ENCODE measurements at regions of chr4 and their contacts with region 1.

Region 1: DNA sequence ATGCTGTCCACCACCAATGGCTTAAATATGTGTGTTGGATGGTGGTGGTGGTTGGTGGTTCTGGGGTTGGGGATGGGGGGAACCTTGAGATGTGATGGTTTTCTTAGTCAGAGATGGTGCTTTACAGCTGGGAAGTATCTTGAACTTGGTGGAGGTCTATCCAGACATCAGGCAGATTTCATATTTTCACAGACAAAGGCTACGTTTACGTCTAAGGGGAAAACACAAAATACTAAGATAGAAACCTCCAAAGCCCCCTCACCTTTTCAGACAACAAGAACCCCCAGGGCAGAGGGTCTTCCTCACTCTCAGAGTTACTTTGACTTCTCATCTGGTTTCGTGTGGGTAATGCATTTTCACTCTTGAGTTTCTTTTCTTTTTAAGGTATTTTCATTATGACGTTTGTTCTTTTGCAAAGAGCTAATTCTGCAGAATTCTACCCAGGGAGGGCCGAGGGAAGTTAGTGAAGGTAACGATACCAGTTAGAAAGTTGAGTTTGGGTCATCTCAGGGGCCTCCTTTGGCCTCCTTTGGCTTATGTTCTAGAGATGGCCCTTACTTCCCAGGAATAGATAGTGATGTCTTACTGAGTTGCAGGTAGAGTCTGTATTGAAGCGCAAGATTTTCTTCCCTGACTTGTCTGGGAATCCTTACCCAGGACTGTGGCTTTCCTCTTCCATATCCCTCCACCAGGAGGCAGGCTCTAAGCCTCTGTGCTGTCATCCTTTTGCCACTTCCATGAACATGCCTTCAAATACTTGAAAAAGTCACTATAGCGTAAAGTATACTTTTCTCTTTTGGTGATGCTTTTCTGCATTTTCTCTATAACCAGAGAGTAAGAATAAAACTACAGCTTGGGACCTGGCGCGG is 31.9 kb downstream of the RHOH start:
- DNase-seq: peak in 1 of 14 experiments; percentile 52
- ATAC-seq: no peak
- H3K4me3 ChIP-seq: peak overlapping the region; percentile 8
- H3K4me3 Mint-ChIP-seq: peak overlapping the region; percentile 49
- H3K27ac ChIP-seq: peak overlapping the region; percentile 70 to 82
- H3K27ac Mint-ChIP-seq: peak overlapping the region; percentile 93
- H3K4me1 ChIP-seq: peaks cover 86% of the 10 kb centered on the region
- H3K4me1 Mint-ChIP-seq: peaks cover 91% of the 10 kb centered on the region
- H3K27me3 ChIP-seq: no peaks in the 10 kb centered on the region
- H3K27me3 Mint-ChIP-seq: no peaks in the 10 kb centered on the region
- CTCF ChIP-seq: peak; percentile 37

Region 2: GRCh38 chr4:40065010-40065409 is 163.7 kb before region 1 on chr4:
- CTCF ChIA-PET with region 1: no interaction called
- POLR2A ChIA-PET with region 1: no interaction called
- intact Hi-C with region 1: no loop called
- DNase-seq: no peak
- ATAC-seq: no peak
- H3K4me3 ChIP-seq: no peak overlapping the region
- H3K4me3 Mint-ChIP-seq: no peak overlapping the region
- H3K27ac ChIP-seq: no peak overlapping the region
- H3K27ac Mint-ChIP-seq: peak overlapping the region; percentile 80
- H3K4me1 ChIP-seq: peaks cover 14% of the 10 kb centered on the region
- H3K4me1 Mint-ChIP-seq: peaks cover 61% of the 10 kb centered on the region
- H3K27me3 ChIP-seq: no peaks in the 10 kb centered on the region
- H3K27me3 Mint-ChIP-seq: no peaks in the 10 kb centered on the region
- CTCF ChIP-seq: no peak

Region 3: DNA sequence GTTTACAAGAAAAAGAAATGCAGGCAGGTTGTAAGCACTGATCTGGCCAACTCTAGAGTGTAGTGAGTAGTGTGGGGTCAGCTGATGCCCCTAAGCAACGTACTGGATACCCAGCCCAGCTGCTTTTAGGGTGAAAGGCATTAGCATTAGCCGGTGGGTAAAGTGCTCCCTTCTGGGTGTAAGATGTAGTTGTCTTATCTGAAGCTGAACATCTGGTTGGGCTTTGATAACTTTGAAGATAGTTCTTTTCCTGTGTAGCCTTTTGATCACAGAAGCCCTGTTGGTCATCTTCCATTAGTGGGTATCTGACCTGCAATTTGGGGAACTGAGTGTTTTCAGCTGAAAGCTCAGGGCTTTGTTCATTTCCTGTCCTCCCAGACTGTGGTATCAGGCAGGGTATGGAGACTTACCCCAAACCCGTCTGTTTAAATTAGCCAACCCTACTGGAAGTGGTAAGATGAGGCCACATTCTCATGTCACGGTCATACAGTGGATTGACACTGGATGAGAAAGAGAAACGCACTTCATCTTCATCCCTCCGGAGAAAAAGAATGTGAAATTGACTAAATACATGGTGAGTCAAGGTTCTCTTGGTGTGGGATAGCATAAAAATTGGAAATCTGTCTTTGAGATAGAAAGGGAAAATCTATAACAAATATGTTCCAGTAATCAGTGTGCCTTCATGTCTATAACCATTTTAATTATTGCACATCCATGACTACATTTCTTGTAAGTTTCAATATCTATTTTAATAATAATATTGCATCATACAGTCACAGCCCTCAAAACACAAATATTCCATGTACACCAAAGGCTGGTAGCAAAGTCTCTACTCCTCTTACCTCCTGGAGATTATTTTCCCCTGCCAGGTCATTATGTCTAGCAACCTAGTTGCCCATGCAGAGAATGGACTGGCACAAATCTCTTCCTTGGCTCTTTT is 23.2 kb before region 1 on chr4:
- CTCF ChIA-PET with region 1: interaction called, 4 read pairs
- POLR2A ChIA-PET with region 1: interaction called, 156 read pairs
- intact Hi-C with region 1: loop called in 1 of 2 experiments (anchors 2 kb)
- DNase-seq: peak in 4 of 14 experiments; percentile 41 to 76 (median 70)
- ATAC-seq: peak; percentile 41
- H3K4me3 ChIP-seq: peak overlapping the region; percentile 74
- H3K4me3 Mint-ChIP-seq: peak overlapping the region; percentile 100
- H3K27ac ChIP-seq: peak overlapping the region; percentile 93 to 99
- H3K27ac Mint-ChIP-seq: peak overlapping the region; percentile 99
- H3K4me1 ChIP-seq: peaks cover 42% of the 10 kb centered on the region
- H3K4me1 Mint-ChIP-seq: peaks cover 79% of the 10 kb centered on the region
- H3K27me3 ChIP-seq: no peaks in the 10 kb centered on the region
- H3K27me3 Mint-ChIP-seq: no peaks in the 10 kb centered on the region
- CTCF ChIP-seq: no peak

Region 4: DNA sequence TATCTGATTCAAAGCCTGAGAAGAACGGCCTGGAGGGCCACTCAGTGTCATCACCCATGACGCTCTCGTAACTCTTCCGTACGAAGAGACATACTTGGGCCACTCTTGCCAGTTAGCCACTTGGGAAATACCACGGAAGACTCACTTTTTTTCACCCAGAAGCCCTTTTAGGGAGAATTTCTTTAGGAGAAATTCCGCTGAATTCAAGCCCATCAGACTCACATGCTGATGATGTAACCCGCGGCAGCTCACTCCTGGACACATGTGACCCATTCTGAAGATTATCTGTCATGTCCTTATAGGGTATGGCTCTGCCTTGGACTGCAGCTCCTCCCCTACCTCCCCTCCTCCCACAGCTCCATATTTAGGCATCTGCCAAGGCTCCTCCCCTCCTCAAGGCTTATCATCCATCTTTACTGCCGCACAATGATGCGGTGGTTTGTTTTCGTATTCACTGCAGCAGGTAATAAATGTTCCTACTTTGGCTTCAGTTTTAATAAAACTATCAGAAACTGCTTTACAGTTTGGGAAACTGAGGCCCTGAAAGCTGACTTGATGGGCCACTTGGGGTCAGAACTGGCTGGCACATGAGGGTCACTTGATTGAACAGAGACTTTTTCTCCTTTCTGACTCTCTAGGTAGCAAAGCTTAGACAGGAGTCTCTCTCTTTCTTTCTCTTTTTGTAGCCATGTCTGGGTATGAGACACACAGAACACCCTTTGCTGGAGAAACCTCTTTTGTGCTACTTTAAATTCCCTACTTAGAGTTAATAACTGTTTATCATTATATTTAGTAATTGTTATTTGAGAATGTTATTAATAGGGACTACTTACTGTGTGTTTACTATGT is 10.2 kb after region 1 on chr4:
- CTCF ChIA-PET with region 1: interaction called, 4 read pairs
- POLR2A ChIA-PET with region 1: interaction called, 49 read pairs
- intact Hi-C with region 1: no loop called
- DNase-seq: peak; percentile 50 to 95 (median 69)
- ATAC-seq: peak; percentile 93
- H3K4me3 ChIP-seq: peak overlapping the region; percentile 46
- H3K4me3 Mint-ChIP-seq: peak overlapping the region; percentile 55
- H3K27ac ChIP-seq: peak overlapping the region; percentile 79 to 97
- H3K27ac Mint-ChIP-seq: peak overlapping the region; percentile 93
- H3K4me1 ChIP-seq: peaks cover 99% of the 10 kb centered on the region
- H3K4me1 Mint-ChIP-seq: peaks cover 92% of the 10 kb centered on the region
- H3K27me3 ChIP-seq: no peaks in the 10 kb centered on the region
- H3K27me3 Mint-ChIP-seq: no peaks in the 10 kb centered on the region
- CTCF ChIP-seq: no peak

Region 5: DNA sequence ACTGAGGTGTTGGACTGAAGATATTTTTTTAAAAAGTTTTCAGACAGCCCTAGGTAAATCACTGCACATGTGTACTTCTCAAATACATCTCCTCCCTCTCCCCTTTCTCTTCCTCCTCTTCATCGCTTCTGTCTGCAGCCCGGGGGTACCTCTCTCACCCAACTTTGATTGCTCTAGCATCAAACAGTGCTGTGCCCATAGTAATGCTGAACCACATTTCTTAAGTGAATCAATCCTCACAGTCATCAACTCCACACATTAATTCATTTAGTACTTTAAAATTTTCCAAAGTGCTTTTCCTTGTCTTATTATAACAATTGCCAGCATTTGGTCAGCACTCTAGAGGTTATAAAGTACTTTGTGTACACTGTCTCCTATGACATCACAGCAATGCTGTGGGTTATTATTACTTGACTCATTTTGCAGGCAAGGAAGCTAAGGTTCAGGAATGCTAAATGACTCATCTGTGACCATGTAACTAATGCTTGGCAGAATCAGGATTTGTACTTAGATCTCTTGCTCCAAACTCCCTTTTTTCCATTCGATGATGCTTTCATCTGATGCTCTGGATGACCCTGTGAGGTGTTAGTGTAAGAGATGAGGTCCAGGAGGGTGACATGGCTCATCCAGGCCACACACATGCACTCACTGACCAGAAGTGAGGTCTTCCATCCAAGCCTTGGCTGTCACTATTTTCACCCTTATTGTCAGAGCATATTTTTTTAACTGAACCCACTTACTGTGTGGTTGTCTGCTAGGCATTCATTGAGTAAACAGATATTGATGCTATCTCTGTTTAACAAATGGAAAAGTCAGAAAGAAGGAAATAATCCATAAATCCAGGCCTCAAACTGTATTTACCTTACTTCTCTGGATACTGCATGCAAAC is 26.9 kb after region 1 on chr4:
- CTCF ChIA-PET with region 1: interaction called, 6 read pairs
- POLR2A ChIA-PET with region 1: interaction called, 11 read pairs
- intact Hi-C with region 1: no loop called
- DNase-seq: no peak
- ATAC-seq: peak; percentile 43
- H3K4me3 ChIP-seq: no peak overlapping the region
- H3K4me3 Mint-ChIP-seq: peak overlapping the region; percentile 40
- H3K27ac ChIP-seq: peak overlapping the region in 1 of 2 donors; percentile 35
- H3K27ac Mint-ChIP-seq: peak overlapping the region; percentile 85
- H3K4me1 ChIP-seq: peaks cover 59% of the 10 kb centered on the region
- H3K4me1 Mint-ChIP-seq: peaks cover 79% of the 10 kb centered on the region
- H3K27me3 ChIP-seq: no peaks in the 10 kb centered on the region
- H3K27me3 Mint-ChIP-seq: no peaks in the 10 kb centered on the region
- CTCF ChIP-seq: no peak